A673 (cell line): ENCODE measurements at regions of chr3 and their contacts with region 1.

Region 1: GRCh38 chr3:125386811-125387210 is 11.7 kb upstream of the ZNF148 start:
- DNase-seq: peak; percentile 24
- H3K4me3 ChIP-seq: no peak overlapping the region
- H3K27ac ChIP-seq: no peak overlapping the region
- H3K4me1 ChIP-seq: peaks cover 7% of the 10 kb centered on the region
- H3K27me3 ChIP-seq: no peaks in the 10 kb centered on the region
- CTCF ChIP-seq: no peak

Region 2: GRCh38 chr3:125202197-125202596 is 184.6 kb before region 1 on chr3:
- CTCF ChIA-PET with region 1: no interaction called
- POLR2A ChIA-PET with region 1: interaction called, 18 read pairs
- intact Hi-C with region 1: no loop called
- DNase-seq: no peak
- H3K4me3 ChIP-seq: no peak overlapping the region
- H3K27ac ChIP-seq: no peak overlapping the region
- H3K4me1 ChIP-seq: no peaks in the 10 kb centered on the region
- H3K27me3 ChIP-seq: no peaks in the 10 kb centered on the region
- CTCF ChIP-seq: peak; percentile 36; the same call in 1 of the 2 replicates

Region 3: GRCh38 chr3:125507128-125507527 is 120.3 kb after region 1 on chr3:
- CTCF ChIA-PET with region 1: no interaction called
- POLR2A ChIA-PET with region 1: no interaction called
- intact Hi-C with region 1: no loop called
- DNase-seq: no peak
- H3K4me3 ChIP-seq: no peak overlapping the region
- H3K27ac ChIP-seq: no peak overlapping the region
- H3K4me1 ChIP-seq: peaks cover 7% of the 10 kb centered on the region
- H3K27me3 ChIP-seq: no peaks in the 10 kb centered on the region
- CTCF ChIP-seq: no peak